ENCODE measurements at regions of chrX and their contacts with region 1.

Region 1: GRCh38 chrX:130079824-130080406 is 30.4 kb downstream of the ELF4 start:
- DNase-seq: peak; percentile 62
- ATAC-seq: no peak
- H3K4me3 Mint-ChIP-seq: no peak overlapping the region
- H3K27ac Mint-ChIP-seq: peak overlapping the region; percentile 45
- H3K4me1 Mint-ChIP-seq: peaks cover 50% of the 10 kb centered on the region
- H3K27me3 Mint-ChIP-seq: no peaks in the 10 kb centered on the region

Region 2: DNA sequence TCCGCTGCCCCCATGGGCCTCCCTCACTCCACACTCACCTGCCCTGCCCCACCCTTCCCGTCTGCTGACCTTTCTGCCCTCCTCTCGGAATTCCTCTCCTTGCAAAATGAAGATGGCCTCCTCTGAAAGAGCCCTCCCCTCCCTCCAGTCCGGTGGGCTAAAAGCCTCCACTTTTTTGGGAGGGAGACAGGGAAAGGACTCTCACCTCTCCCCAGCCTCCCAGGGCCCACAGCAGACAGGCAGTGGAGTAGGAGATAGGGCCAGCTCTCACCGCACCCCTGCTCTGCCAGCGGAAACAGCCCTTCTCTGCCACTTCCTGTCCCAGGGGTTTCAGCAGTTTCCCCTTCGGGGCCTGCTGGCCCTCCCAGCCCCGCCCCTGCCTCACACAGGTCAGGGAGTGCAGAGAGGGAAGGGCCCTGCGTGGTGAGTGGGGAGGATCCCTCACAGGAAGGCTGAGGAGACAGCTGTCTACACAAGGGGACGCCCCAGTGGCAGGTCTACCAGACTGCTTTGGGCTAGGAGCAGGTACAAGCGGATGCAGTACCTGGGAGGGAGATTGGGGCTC is 12.1 kb after region 1 on chrX:
- CTCF ChIA-PET with region 1: interaction called, 10 read pairs
- DNase-seq: peak; percentile 96
- ATAC-seq: peak; percentile 95
- H3K4me3 Mint-ChIP-seq: peak overlapping the region; percentile 85
- H3K27ac Mint-ChIP-seq: peak overlapping the region; percentile 97
- H3K4me1 Mint-ChIP-seq: peaks cover 67% of the 10 kb centered on the region
- H3K27me3 Mint-ChIP-seq: no peaks in the 10 kb centered on the region

Region 3: DNA sequence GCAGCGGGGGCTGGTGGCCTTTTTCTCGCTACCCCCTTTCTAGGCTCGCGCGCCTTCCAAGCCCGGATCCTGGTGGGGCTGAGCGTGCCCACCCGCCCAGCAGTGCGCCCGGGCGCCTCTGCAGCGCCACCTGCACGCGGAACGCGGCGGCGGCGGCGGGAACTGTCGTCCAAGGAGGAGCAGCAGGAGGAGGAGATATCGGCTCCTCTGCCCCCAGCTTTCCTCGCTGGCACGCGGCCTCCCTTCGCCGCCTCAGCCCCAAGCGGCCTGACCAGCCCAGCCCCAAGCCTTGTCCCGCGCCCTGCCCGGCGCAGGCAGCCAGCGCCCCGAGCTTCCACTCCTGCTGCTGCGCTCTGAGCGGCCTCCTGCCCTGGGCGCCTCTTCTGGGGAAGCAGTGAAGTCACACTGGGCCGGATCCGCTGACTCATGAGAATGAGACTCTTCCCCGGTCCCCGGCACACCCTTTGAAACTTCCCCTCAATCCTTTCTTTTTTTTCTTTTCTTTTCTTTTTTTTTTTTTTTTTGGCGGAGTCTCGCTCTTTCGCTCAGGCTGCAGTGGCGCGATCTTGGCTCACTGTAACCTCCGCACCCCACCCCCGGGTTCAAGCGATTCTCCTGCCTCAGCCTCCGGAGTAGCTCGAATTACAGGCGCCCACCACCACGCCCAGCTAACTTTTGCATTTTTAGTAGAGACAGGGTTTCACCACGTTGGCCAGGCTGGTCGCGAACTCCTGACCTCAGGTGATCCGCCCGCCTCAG is 41.0 kb after region 1 on chrX:
- CTCF ChIA-PET with region 1: interaction called, 147 read pairs
- DNase-seq: peak; percentile 78
- ATAC-seq: peak; percentile 90
- H3K4me3 Mint-ChIP-seq: peak overlapping the region; percentile 67
- H3K27ac Mint-ChIP-seq: peak overlapping the region; percentile 81
- H3K4me1 Mint-ChIP-seq: peaks cover 30% of the 10 kb centered on the region
- H3K27me3 Mint-ChIP-seq: no peaks in the 10 kb centered on the region

Region 4: GRCh38 chrX:130170752-130171445 is 91.0 kb after region 1 on chrX:
- CTCF ChIA-PET with region 1: interaction called, 30 read pairs
- DNase-seq: peak; percentile 88
- ATAC-seq: peak; percentile 84
- H3K4me3 Mint-ChIP-seq: peak overlapping the region; percentile 92
- H3K27ac Mint-ChIP-seq: peak overlapping the region; percentile 98
- H3K4me1 Mint-ChIP-seq: peaks cover 31% of the 10 kb centered on the region
- H3K27me3 Mint-ChIP-seq: no peaks in the 10 kb centered on the region

Region 5: GRCh38 chrX:130204647-130205046 is 124.7 kb after region 1 on chrX:
- CTCF ChIA-PET with region 1: no interaction called
- DNase-seq: no peak
- ATAC-seq: no peak
- H3K4me3 Mint-ChIP-seq: no peak overlapping the region
- H3K27ac Mint-ChIP-seq: no peak overlapping the region
- H3K4me1 Mint-ChIP-seq: no peaks in the 10 kb centered on the region
- H3K27me3 Mint-ChIP-seq: no peaks in the 10 kb centered on the region

Region 6: GRCh38 chrX:130285069-130285620 is 205.2 kb after region 1 on chrX:
- CTCF ChIA-PET with region 1: no interaction called
- DNase-seq: no peak
- ATAC-seq: no peak
- H3K4me3 Mint-ChIP-seq: no peak overlapping the region
- H3K27ac Mint-ChIP-seq: no peak overlapping the region
- H3K4me1 Mint-ChIP-seq: no peaks in the 10 kb centered on the region
- H3K27me3 Mint-ChIP-seq: no peaks in the 10 kb centered on the region